ENCODE measurements at regions of chr7 and their contacts with region 1.

Region 1: DNA sequence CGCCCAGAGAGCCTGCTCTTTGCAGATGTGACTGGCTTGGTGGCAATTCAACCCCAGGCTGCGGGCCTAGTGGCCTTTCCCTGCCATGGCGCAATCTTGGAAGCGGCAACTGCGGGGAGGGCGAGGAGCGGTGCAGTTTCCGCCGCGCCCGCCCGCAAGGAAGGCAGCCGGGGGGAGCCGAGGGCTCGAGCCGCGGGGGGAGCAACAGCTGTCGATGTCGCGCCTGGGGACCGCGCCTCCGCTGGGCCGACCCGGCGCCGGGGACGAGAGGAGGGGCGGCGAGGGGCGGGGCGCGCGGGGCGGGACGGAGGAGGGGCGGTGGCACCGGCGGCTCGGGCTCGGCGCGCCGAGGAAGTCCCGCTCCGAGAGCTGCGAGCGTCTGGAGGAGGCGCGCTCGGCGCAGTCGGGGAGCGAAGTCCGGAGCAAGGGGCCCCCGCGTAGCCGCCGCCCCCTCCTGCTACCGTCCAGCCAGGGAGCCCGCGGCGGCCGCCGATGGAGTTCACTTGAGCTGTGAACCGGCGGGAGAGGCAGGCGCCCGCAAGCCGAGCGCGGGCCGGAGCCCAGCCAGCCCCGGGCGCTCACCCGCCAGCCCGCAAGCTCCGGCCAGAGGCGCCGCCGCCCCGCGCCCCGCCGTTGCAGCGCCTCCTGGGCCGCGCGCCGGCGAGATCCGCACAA is 438.1 kb upstream of the GALNT17 start:
- DNase-seq: peak in 7 of 9 donors; percentile 12 to 40 (median 32)
- ATAC-seq: peak; percentile 83
- H3K4me3 ChIP-seq: no peak overlapping the region
- H3K4me3 Mint-ChIP-seq: peak overlapping the region; percentile 68 to 89 (median 78)
- H3K27ac ChIP-seq: no peak overlapping the region
- H3K27ac Mint-ChIP-seq: no peak overlapping the region
- H3K4me1 ChIP-seq: no peaks in the 10 kb centered on the region
- H3K4me1 Mint-ChIP-seq: peaks cover 0 to 23% (median 7%) of the 10 kb centered on the region in 7 donors
- H3K27me3 ChIP-seq: no peaks in the 10 kb centered on the region
- H3K27me3 Mint-ChIP-seq: peaks cover 31 to 64% (median 43%) of the 10 kb centered on the region in 5 donors

Region 2: GRCh38 chr7:68904630-68905029 is 1789.2 kb before region 1 on chr7:
- CTCF ChIA-PET with region 1: no interaction called
- POLR2A ChIA-PET with region 1: no interaction called
- intact Hi-C with region 1: no loop called
- DNase-seq: no peak
- ATAC-seq: no peak
- H3K4me3 ChIP-seq: no peak overlapping the region
- H3K4me3 Mint-ChIP-seq: no peak overlapping the region
- H3K27ac ChIP-seq: no peak overlapping the region
- H3K27ac Mint-ChIP-seq: no peak overlapping the region
- H3K4me1 ChIP-seq: no peaks in the 10 kb centered on the region
- H3K4me1 Mint-ChIP-seq: no peaks in the 10 kb centered on the region
- H3K27me3 ChIP-seq: no peaks in the 10 kb centered on the region
- H3K27me3 Mint-ChIP-seq: peaks cover 0 to 6% (median 0%) of the 10 kb centered on the region in 5 donors

Region 3: DNA sequence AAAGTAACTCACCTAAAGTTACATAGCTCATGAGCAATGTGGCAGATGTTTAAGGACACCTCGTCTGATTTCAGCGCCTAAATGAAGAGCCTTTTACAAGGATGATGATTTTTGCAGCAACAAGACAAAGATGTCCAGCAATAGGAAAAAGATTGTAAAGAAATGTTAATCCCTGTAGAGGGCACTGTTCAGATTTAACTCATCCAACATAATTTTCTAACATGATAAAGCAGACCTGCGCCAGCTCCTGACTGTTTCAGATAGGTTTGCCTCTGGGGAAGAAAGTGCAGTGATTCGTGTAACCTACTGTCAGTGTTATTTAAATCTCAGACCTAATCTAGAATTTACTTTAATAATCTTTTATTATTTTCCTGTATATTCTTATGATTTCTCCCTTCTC is 500.3 kb before region 1 on chr7:
- CTCF ChIA-PET with region 1: interaction called, 3 read pairs
- POLR2A ChIA-PET with region 1: no interaction called
- intact Hi-C with region 1: loop called in 1 of 2 experiments (anchors 1 kb)
- DNase-seq: peak in 1 of 9 donors; percentile 11
- ATAC-seq: no peak
- H3K4me3 ChIP-seq: no peak overlapping the region
- H3K4me3 Mint-ChIP-seq: no peak overlapping the region
- H3K27ac ChIP-seq: no peak overlapping the region
- H3K27ac Mint-ChIP-seq: no peak overlapping the region
- H3K4me1 ChIP-seq: no peaks in the 10 kb centered on the region
- H3K4me1 Mint-ChIP-seq: no peaks in the 10 kb centered on the region
- H3K27me3 ChIP-seq: no peaks in the 10 kb centered on the region
- H3K27me3 Mint-ChIP-seq: peaks cover 0 to 3% (median 0%) of the 10 kb centered on the region in 5 donors

Region 4: GRCh38 chr7:70647801-70648498 is 45.9 kb before region 1 on chr7:
- CTCF ChIA-PET with region 1: no interaction called
- POLR2A ChIA-PET with region 1: no interaction called
- intact Hi-C with region 1: loop called (anchors 2 to 5 kb)
- DNase-seq: peak in 8 of 9 donors; percentile 51 to 78 (median 67)
- ATAC-seq: peak; percentile 96
- H3K4me3 ChIP-seq: no peak overlapping the region
- H3K4me3 Mint-ChIP-seq: peak overlapping the region in 9 of 10 donors; percentile 35 to 63 (median 51)
- H3K27ac ChIP-seq: no peak overlapping the region
- H3K27ac Mint-ChIP-seq: peak overlapping the region; percentile 25 to 91 (median 75)
- H3K4me1 ChIP-seq: peaks cover 0 to 21% of the 10 kb centered on the region in 2 donors
- H3K4me1 Mint-ChIP-seq: peaks cover 0 to 25% (median 15%) of the 10 kb centered on the region in 7 donors
- H3K27me3 ChIP-seq: no peaks in the 10 kb centered on the region
- H3K27me3 Mint-ChIP-seq: peaks cover 0 to 20% (median 0%) of the 10 kb centered on the region in 5 donors

Region 5: GRCh38 chr7:70654979-70655378 is 38.8 kb before region 1 on chr7:
- CTCF ChIA-PET with region 1: no interaction called
- POLR2A ChIA-PET with region 1: no interaction called
- intact Hi-C with region 1: loop called in 1 of 2 experiments (anchors 5 kb)
- DNase-seq: no peak
- ATAC-seq: no peak
- H3K4me3 ChIP-seq: no peak overlapping the region
- H3K4me3 Mint-ChIP-seq: no peak overlapping the region
- H3K27ac ChIP-seq: no peak overlapping the region
- H3K27ac Mint-ChIP-seq: no peak overlapping the region
- H3K4me1 ChIP-seq: peaks cover 5 to 13% of the 10 kb centered on the region in 2 donors
- H3K4me1 Mint-ChIP-seq: peaks cover 4 to 16% (median 12%) of the 10 kb centered on the region in 7 donors
- H3K27me3 ChIP-seq: no peaks in the 10 kb centered on the region
- H3K27me3 Mint-ChIP-seq: peaks cover 0 to 24% (median 4%) of the 10 kb centered on the region in 5 donors

Measured in naive thymus-derived CD4-positive, alpha-beta T cell (primary cell).